MCF 10A (cell line): ENCODE measurements at regions of chr4 and their contacts with region 1.

Region 1: GRCh38 chr4:55071951-55072350 is 53.4 kb downstream of the KDR start:
- DNase-seq: peak; percentile 48
- H3K4me3 Mint-ChIP-seq: no peak overlapping the region
- H3K27ac Mint-ChIP-seq: no peak overlapping the region
- H3K4me1 Mint-ChIP-seq: peaks cover 13% of the 10 kb centered on the region
- H3K27me3 Mint-ChIP-seq: no peaks in the 10 kb centered on the region
- CTCF ChIP-seq: no peak

Region 2: GRCh38 chr4:55038176-55038890 is 33.6 kb before region 1 on chr4:
- CTCF ChIA-PET with region 1: interaction called, 3 read pairs
- POLR2A ChIA-PET with region 1: interaction called, 11 read pairs
- intact Hi-C with region 1: no loop called
- DNase-seq: peak; percentile 77
- H3K4me3 Mint-ChIP-seq: peak overlapping the region; percentile 59
- H3K27ac Mint-ChIP-seq: peak overlapping the region; percentile 73
- H3K4me1 Mint-ChIP-seq: peaks cover 59% of the 10 kb centered on the region
- H3K27me3 Mint-ChIP-seq: no peaks in the 10 kb centered on the region
- CTCF ChIP-seq: no peak

Region 3: DNA sequence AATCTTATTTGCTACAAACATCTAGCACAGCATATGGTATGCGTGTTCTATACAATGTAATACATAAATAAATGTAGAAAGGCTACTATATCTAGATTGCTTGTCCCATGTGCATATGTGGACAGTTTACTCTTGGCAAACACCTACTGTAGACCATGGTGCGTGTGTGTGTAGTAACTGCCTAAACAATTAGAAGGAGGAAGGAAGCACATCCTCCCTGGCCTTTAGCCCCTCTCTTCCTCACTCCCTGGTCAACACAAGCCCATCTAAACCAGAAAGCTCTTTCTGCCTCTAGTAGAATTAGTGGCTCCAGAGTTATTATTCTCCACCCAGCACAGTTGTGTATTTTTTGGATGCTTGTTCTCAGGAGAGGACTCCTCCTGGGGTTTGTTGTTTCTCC is 20.4 kb before region 1 on chr4:
- CTCF ChIA-PET with region 1: no interaction called
- POLR2A ChIA-PET with region 1: no interaction called
- intact Hi-C with region 1: no loop called
- DNase-seq: no peak
- H3K4me3 Mint-ChIP-seq: no peak overlapping the region
- H3K27ac Mint-ChIP-seq: no peak overlapping the region
- H3K4me1 Mint-ChIP-seq: peaks cover 4% of the 10 kb centered on the region
- H3K27me3 Mint-ChIP-seq: no peaks in the 10 kb centered on the region
- CTCF ChIP-seq: no peak